SK-MEL-5 (cell line): ENCODE measurements at regions of chr14 and their contacts with region 1.

Region 1: DNA sequence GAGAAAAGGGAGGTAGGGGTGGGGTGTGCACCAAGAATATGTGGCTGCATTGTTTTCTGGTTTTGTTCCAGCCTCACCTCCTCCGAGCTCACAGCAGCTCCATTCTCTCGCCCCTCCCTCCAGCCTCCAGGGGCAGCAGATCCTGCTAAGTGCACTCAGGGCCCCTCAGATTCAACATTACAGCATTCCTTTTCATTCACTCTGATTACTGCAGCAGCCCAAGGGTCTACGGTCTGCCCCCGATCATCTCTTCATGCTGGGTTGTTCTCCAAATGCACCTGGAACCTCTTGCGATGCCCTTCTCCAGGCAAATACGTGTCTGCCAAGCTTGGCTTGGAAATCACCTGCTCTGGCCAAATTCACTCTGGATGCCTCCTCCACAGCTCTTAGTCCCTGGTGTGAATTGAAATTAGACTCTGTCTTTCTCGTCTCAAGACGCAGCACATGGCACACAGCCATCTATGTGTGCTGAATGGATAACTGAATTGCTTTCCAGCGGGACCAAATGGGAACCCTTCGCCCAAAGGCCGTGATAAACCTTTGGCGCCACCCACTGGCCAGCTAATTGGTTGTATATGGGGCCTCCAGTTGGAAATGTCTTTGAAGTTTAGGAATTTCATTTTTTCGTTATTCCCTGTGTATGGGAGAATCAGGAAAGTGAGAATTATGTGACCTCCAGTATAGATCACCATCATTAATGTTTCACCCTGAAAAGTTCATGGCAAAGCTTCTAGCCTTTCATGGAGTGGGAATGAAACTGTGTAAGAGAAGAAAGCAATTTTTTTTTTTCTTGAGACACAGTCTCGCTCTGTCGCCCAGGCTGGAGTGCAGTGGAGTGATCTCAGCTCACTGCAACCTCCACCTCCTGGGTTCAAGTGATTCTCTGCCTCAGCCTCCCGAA is 9.6 kb upstream of the HSP90AA1 start:
- DNase-seq: peak; percentile 90

Region 2: GRCh38 chr14:101980251-101981099 is 116.0 kb before region 1 on chr14:
- in situ Hi-C with region 1: no loop called
- DNase-seq: peak; percentile 93

Region 3: GRCh38 chr14:102182190-102182589 is 85.7 kb after region 1 on chr14:
- in situ Hi-C with region 1: loop called (anchors 5 kb)
- DNase-seq: peak; percentile 90

Region 4: DNA sequence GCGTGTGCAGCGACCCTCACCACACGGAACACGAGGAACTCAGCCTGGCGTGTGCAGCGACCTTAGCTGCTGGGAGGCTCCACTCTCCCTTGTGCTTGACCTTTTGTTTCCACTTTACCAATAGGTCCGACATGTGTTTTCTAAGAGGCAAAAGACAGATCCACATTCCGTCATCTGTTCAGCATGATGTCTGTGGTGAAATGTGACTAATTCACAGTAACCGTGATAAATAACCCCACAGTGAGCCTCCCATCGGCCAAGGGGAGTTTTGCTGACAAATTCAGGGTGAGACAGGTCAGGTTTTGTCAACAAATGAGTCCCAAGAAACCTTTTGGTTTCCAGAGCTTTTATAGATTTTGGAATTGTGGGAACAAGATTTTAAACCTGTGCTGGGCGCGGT is 152.6 kb after region 1 on chr14:
- in situ Hi-C with region 1: no loop called
- DNase-seq: no peak